ACHN (cell line): ENCODE measurements at regions of chr1 and their contacts with region 1.

Region 1: GRCh38 chr1:177181631-177182291 is 11.0 kb downstream of the BRINP2 start:
- DNase-seq: peak; percentile 73

Region 2: GRCh38 chr1:176559878-176560277 is 621.9 kb before region 1 on chr1:
- in situ Hi-C with region 1: no loop called
- DNase-seq: peak; percentile 65

Region 3: GRCh38 chr1:176903474-176903873 is 278.3 kb before region 1 on chr1:
- in situ Hi-C with region 1: loop called (anchors 25 kb)
- DNase-seq: peak; percentile 6